PC-9 (cell line): ENCODE measurements at regions of chr10 and their contacts with region 1.

Region 1: DNA sequence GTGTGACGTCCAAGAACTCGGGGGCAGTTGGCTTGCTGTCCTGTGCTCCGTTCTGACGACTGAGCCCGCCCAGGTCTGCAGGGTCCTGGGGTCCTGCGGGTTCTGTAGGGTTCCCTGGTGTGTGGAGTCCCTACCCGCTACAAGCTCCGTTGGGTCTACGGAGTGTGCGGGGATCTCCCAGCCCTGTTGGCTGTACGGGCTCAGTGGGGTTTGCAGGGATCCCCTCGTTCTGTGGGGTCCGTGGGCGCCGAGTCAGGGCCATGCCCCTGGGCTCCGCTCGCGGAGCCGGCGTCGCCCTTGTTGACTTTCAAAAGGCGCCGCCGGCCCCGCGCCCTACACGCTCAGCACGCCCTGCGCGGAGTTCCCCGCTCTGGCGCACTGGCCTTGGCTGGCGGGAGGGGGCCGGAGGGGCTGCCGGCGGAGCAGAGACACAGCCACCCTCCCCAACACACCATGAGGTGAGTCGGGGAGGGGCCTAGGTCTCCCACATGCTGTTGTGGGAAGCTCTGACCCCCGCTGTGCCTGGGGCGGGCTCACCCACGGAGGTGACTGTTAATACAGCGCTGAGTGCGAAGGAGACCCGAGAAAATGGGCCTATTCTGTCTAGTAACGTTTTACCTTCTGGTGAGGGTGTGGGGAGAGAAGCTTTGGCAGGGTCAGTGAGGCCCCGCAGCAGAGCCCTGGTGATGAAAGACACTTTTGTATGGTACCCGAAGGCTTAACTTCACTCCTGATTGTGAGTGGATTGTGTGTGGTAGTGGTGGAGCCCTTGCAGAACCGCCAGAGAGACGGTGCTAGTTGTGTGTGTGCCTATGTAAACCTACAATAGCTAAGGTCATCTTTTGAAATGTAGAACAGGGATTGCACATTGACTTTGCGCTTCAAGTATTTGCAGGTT is 8.1 kb downstream of the TASOR2 start:
- DNase-seq: peak in 1 of 2 experiments; percentile 51
- H3K4me3 ChIP-seq: no peak overlapping the region
- H3K27ac ChIP-seq: no peak overlapping the region
- H3K4me1 ChIP-seq: no peaks in the 10 kb centered on the region
- H3K27me3 ChIP-seq: no peaks in the 10 kb centered on the region
- CTCF ChIP-seq: no peak

Region 2: DNA sequence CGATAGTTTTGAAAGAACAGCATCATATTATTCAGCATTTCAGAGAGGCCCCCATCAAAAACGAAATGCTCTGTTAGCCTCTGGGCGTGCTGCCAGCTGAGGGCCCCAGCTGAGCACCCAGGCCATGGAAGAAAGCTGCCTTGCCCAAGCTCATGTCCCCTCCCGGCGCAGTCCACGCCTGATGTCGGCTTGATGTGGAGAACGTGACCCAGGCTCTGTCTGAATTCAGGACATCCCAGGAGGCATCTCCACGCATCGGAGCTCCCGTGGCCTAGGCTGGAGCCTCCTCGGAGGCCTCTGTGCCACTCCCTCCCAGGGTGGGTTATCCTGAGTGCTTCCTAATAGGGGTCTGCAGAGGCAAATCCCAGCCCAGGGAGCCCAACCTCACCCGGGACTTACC is 1085.0 kb before region 1 on chr10:
- CTCF ChIA-PET with region 1: no interaction called
- POLR2A ChIA-PET with region 1: no interaction called
- intact Hi-C with region 1: no loop called
- DNase-seq: no peak
- H3K4me3 ChIP-seq: no peak overlapping the region
- H3K27ac ChIP-seq: no peak overlapping the region
- H3K4me1 ChIP-seq: no peaks in the 10 kb centered on the region
- H3K27me3 ChIP-seq: no peaks in the 10 kb centered on the region
- CTCF ChIP-seq: no peak

Region 3: DNA sequence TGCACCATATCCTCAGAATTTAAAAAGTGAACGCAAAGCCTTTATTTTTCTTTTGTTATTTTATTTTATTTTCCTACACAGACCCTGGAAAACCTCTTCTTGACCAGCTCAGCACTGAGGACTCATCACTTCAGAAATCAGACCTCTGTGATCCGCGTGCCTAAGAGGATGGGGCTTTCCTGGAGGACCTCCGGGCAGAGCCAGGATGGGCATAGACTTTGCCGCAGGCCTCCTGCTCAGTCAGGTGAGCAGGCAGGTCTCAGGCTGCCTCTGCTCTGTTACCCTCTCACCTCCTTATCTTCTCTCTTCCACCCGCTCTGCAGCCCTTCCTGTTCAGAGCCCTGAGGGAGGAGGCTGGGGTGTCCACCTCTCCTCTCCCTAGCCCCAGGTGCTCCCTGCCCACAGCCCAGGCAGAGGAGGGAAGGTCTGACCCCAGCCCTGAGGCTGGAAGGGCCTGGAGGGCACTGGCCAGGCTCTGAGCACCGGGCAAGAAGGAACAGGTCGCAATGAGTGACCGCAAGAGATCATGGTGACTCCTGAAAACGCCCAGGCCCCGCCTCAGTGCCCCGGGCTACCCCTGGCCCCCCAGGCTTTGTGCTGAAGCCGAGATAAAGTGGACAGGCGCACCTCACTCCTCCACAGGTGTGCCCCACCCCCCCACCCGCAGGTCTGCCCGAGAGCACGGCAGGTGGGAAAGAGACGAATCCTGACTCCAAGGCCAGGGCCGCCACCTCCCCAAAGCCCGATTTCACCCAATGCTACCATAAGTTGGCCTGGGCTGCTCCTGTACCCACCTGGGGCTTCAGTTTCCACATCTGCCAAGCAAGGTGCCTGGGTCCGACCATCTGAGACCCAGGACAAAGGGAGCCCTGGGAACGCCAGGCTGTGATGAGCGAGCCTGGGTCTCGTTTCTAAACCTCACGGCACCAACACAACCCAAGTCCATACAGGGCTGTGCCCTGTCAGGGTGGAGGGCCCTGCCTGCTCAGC is 196.2 kb before region 1 on chr10:
- CTCF ChIA-PET with region 1: no interaction called
- POLR2A ChIA-PET with region 1: interaction called, 25 read pairs
- intact Hi-C with region 1: no loop called
- DNase-seq: peak; percentile 80 to 93
- H3K4me3 ChIP-seq: no peak overlapping the region
- H3K27ac ChIP-seq: peak overlapping the region; percentile 66
- H3K4me1 ChIP-seq: peaks cover 79% of the 10 kb centered on the region
- H3K27me3 ChIP-seq: no peaks in the 10 kb centered on the region
- CTCF ChIP-seq: no peak

Region 4: DNA sequence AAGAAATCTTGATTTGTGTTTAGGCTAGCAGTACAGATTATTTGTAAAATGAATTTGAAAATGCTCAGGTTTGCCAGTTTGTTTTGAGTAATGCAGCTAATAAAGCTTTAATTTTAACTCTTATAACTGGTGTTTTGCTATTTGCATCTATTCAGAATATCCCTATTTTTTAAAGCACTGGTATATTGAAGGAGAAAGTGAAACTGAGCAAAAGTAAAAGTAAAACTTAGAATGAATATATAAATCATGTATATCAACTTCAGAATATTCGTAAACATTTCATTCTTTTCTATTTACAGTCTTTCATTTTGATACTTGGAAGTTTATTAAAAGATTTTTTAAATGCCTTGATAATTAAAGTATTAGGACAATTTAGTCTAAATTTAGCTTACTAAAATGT is 18.1 kb after region 1 on chr10:
- CTCF ChIA-PET with region 1: interaction called, 4 read pairs
- POLR2A ChIA-PET with region 1: no interaction called
- intact Hi-C with region 1: loop called (anchors 2 kb)
- DNase-seq: no peak
- H3K4me3 ChIP-seq: no peak overlapping the region
- H3K27ac ChIP-seq: no peak overlapping the region
- H3K4me1 ChIP-seq: no peaks in the 10 kb centered on the region
- H3K27me3 ChIP-seq: no peaks in the 10 kb centered on the region
- CTCF ChIP-seq: no peak